ENCODE measurements at regions of chr7 and their contacts with region 1.

Region 1: DNA sequence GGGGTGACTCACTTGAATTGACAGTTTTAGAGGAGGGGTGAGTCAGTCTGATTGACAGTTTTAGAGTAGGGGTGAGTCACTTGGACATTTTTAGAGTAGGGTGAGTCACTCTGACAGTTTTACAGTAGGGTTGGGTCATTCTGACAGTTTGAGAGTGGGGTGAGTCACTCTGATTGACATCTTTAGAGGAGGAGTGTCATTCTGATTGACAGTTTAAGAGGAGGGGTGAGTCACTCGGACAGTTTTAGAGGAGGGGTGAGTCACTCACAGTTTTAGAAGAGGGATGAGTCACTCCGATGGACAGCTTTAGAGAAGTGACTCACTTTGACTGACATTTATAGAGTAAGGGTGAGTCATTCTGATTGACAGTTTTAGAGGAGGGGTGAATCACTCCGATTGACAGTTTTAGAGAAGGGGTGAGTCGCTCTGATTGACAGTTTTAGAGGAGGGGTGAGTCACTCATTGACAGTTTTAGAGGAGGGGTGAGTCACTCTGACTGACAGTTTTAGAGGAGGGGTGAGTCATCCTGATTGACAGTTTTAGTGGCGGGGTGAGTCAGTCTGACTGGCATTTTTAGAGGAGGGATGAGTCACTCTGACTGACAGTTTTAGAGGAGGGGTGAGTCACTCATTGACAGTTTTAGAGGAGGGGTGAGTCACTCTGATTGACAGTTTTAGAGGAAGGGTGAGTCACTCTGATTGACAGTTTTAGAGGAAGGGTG is 595.9 kb downstream of the DNAJB6 start:
- DNase-seq: peak; percentile 31
- H3K4me3 Mint-ChIP-seq: peak overlapping the region; percentile 26
- H3K27ac Mint-ChIP-seq: peak overlapping the region; percentile 95
- H3K4me1 Mint-ChIP-seq: peaks cover 4% of the 10 kb centered on the region
- H3K27me3 Mint-ChIP-seq: peaks cover 7% of the 10 kb centered on the region

Region 2: GRCh38 chr7:157769057-157769480 is 163.6 kb before region 1 on chr7:
- CTCF ChIA-PET with region 1: no interaction called
- intact Hi-C with region 1: no loop called
- DNase-seq: no peak
- H3K4me3 Mint-ChIP-seq: no peak overlapping the region
- H3K27ac Mint-ChIP-seq: no peak overlapping the region
- H3K4me1 Mint-ChIP-seq: no peaks in the 10 kb centered on the region
- H3K27me3 Mint-ChIP-seq: peaks cover 5% of the 10 kb centered on the region

Region 3: GRCh38 chr7:157881048-157881771 is 51.4 kb before region 1 on chr7:
- CTCF ChIA-PET with region 1: no interaction called
- intact Hi-C with region 1: loop called (anchors 1 kb)
- DNase-seq: peak; percentile 48
- H3K4me3 Mint-ChIP-seq: no peak overlapping the region
- H3K27ac Mint-ChIP-seq: peak overlapping the region; percentile 57
- H3K4me1 Mint-ChIP-seq: no peaks in the 10 kb centered on the region
- H3K27me3 Mint-ChIP-seq: no peaks in the 10 kb centered on the region

Measured in activated naive CD4-positive, alpha-beta T cell treated with anti-CD3 and anti-CD28 coated beads for 36 hours (primary cell).